ENCODE measurements at regions of chr1 and their contacts with region 1.

Region 1: DNA sequence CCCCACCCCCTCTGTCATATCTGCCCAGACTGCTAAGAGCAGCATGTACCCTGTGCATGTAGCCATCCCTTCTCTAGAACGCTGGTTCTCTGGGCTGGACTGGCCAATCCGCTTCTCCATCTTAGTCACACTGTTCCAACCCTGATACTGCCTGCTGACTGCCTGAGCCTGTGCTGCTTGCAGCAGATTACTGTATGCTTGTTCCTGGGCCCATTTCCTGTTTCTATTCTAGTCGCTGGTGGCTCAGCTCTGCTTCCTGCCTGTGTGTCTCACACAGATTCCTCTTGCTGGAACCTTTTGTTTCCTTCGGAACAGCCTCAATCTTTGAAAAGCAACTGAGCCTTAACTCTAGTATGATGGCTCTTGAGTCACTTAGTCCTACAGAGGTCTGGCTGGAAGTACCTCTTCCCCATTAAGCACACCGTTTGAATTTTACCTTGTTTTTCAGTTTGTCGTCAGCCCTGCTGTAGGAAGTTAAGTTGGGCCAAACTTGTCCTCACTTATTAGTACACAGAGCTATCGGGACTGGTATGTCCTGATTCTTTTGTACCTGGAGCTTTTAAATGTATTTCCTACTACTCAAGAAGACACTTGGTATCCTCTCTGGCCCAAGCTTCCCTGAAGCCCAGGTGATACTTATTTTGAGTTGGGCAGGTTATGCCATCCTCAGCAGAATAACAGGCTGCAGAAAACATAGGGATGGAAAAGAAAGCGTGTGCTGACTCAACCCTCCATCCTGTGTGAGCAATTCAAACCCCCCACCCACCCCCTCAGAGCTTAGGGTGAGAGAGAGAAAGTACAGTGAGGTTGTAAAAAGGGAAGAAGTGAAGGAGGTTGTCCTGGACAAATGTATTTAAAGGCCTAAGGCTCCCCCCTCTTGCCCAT is 43.4 kb upstream of the PIGV start:
- DNase-seq: peak; percentile 92
- ATAC-seq: peak; percentile 95
- H3K4me3 Mint-ChIP-seq: peak overlapping the region; percentile 58
- H3K27ac Mint-ChIP-seq: peak overlapping the region; percentile 86
- H3K4me1 Mint-ChIP-seq: peaks cover 83% of the 10 kb centered on the region
- H3K27me3 Mint-ChIP-seq: no peaks in the 10 kb centered on the region
- CTCF ChIP-seq: no peak

Region 2: GRCh38 chr1:26723013-26723991 is 21.0 kb before region 1 on chr1:
- CTCF ChIA-PET with region 1: interaction called, 11 read pairs
- POLR2A ChIA-PET with region 1: interaction called, 26 read pairs
- intact Hi-C with region 1: no loop called
- DNase-seq: peak; percentile 40
- ATAC-seq: peak; percentile 36
- H3K4me3 Mint-ChIP-seq: peak overlapping the region; percentile 7
- H3K27ac Mint-ChIP-seq: peak overlapping the region; percentile 84
- H3K4me1 Mint-ChIP-seq: peaks cover 93% of the 10 kb centered on the region
- H3K27me3 Mint-ChIP-seq: no peaks in the 10 kb centered on the region
- CTCF ChIP-seq: no peak

Region 3: GRCh38 chr1:26728645-26729044 is 15.7 kb before region 1 on chr1:
- CTCF ChIA-PET with region 1: interaction called, 11 read pairs
- POLR2A ChIA-PET with region 1: interaction called, 26 read pairs
- intact Hi-C with region 1: no loop called
- DNase-seq: no peak
- ATAC-seq: no peak
- H3K4me3 Mint-ChIP-seq: no peak overlapping the region
- H3K27ac Mint-ChIP-seq: peak overlapping the region; percentile 72
- H3K4me1 Mint-ChIP-seq: peaks cover 94% of the 10 kb centered on the region
- H3K27me3 Mint-ChIP-seq: no peaks in the 10 kb centered on the region
- CTCF ChIP-seq: no peak

Region 4: DNA sequence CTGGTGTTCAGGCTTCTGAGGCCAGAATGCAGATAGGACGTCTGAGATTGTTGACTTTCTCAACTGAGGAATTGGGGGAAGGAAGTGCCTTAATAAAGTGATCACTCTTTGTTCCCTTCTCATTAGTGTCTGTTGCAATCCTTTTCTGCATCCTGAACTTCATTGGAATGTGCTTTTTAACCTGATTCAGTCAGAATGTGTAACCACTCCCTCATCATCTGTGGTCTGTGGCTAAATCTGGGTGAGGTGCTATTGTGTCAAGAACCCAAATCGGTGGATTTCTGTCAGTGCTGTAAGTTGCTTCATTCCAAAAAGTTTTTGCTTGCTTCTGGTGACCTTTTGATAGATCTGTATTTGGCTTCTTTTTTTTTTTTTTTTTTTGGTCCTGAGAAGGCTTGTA is 10.3 kb before region 1 on chr1:
- CTCF ChIA-PET with region 1: interaction called, 11 read pairs
- POLR2A ChIA-PET with region 1: interaction called, 18 read pairs
- intact Hi-C with region 1: no loop called
- DNase-seq: peak; percentile 56
- ATAC-seq: peak; percentile 40
- H3K4me3 Mint-ChIP-seq: no peak overlapping the region
- H3K27ac Mint-ChIP-seq: peak overlapping the region; percentile 79
- H3K4me1 Mint-ChIP-seq: peaks cover 63% of the 10 kb centered on the region
- H3K27me3 Mint-ChIP-seq: no peaks in the 10 kb centered on the region
- CTCF ChIP-seq: no peak

Measured in activated CD8-positive, alpha-beta T cell treated with anti-CD3 and anti-CD28 coated beads for 36 hours (primary cell).